Activated naive CD4-positive, alpha-beta T cell treated with anti-CD3 and anti-CD28 coated beads for 36 hours (primary cell): ENCODE measurements at regions of chr12 and their contacts with region 1.

Region 1: GRCh38 chr12:22624870-22625761 is at the start of gene ETNK1:
- DNase-seq: peak; percentile 87
- H3K4me3 Mint-ChIP-seq: peak within 1 kb of the TSS; percentile 93
- H3K27ac Mint-ChIP-seq: peak within 1 kb of the TSS; percentile 90
- H3K4me1 Mint-ChIP-seq: peaks cover 28% of the 10 kb centered on the region
- H3K27me3 Mint-ChIP-seq: no peaks in the 10 kb centered on the region
- total RNA-seq, gene ETNK1: 35.9 to 39.4 TPM

Region 2: GRCh38 chr12:21657326-21658077 is 967.6 kb before region 1 on chr12 and contains the start of gene LDHB:
- CTCF ChIA-PET with region 1: no interaction called
- intact Hi-C with region 1: loop called (anchors 10 kb)
- DNase-seq: peak; percentile 98
- H3K4me3 Mint-ChIP-seq: peak within 1 kb of the TSS; percentile 98
- H3K27ac Mint-ChIP-seq: peak within 1 kb of the TSS; percentile 98
- H3K4me1 Mint-ChIP-seq: peaks cover 59% of the 10 kb centered on the region
- H3K27me3 Mint-ChIP-seq: no peaks in the 10 kb centered on the region
- total RNA-seq, gene LDHB: 2,296 to 2,461 TPM

Region 3: DNA sequence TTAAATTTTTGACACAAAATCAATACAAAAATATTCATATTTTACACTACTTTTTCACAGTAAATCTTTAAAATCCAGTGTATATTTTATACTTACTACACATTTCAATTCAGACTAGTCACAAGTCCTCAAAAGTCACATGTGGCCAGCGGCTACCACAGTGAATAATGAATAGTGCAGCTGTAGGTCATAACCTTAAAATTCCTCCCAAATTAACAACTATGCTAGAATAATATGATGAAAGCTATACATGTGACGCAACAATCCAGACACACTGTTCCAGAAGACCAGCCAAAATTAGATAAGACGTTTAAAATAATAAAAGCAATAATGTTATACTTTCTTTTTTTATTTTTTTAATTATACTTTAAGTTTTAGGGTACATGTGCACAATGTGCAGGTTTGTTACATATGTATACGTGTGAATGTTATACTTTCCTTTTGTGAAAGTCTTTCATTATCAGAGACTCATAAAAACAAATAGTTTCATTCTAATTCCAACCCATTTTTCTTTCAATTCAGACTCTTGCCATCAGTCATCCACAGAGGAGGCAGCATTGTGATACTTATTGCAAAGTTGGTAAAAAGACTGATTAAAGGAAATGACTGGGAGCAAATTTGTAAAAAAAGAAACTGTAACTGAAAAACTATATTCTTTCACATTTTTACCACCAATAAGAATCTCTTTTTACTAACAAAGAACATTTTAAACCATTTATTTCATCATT is 147.8 kb before region 1 on chr12:
- CTCF ChIA-PET with region 1: no interaction called
- intact Hi-C with region 1: loop called (anchors 5 kb)
- DNase-seq: no peak
- H3K4me3 Mint-ChIP-seq: no peak overlapping the region
- H3K27ac Mint-ChIP-seq: peak overlapping the region; percentile 32
- H3K4me1 Mint-ChIP-seq: peaks cover 24% of the 10 kb centered on the region
- H3K27me3 Mint-ChIP-seq: no peaks in the 10 kb centered on the region

Region 4: GRCh38 chr12:22544038-22544979 is 80.8 kb before region 1 on chr12 and contains the start of gene C2CD5:
- CTCF ChIA-PET with region 1: interaction called, 7 read pairs
- intact Hi-C with region 1: loop called (anchors 1 kb)
- DNase-seq: peak; percentile 96
- H3K4me3 Mint-ChIP-seq: peak within 1 kb of the TSS; percentile 91
- H3K27ac Mint-ChIP-seq: peak within 1 kb of the TSS; percentile 91
- H3K4me1 Mint-ChIP-seq: peaks cover 40% of the 10 kb centered on the region
- H3K27me3 Mint-ChIP-seq: no peaks in the 10 kb centered on the region
- total RNA-seq, gene C2CD5: 34.5 to 39.9 TPM

Region 5: DNA sequence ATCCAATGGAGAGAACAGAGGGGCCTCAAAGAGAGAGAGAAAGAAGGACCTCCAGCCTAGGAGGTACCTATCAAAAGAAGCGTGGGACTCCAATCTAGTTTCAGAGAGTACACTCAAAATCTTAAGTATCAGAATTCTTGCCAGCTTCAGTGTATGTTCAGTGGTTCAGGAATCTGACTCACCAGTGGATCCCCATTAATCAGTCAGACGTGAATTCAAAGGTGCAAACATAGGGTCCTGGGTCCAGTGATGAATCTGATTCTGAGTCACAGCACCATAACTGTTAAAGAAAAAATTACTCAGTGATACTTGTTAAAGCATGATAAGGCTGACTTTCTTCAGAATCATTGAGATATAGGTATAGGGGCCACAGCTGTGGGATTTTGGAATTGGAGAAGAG is 33.1 kb after region 1 on chr12:
- CTCF ChIA-PET with region 1: no interaction called
- intact Hi-C with region 1: loop called (anchors 1 kb)
- DNase-seq: peak; percentile 54
- H3K4me3 Mint-ChIP-seq: peak overlapping the region; percentile 26
- H3K27ac Mint-ChIP-seq: peak overlapping the region; percentile 58
- H3K4me1 Mint-ChIP-seq: peaks cover 26% of the 10 kb centered on the region
- H3K27me3 Mint-ChIP-seq: no peaks in the 10 kb centered on the region